Mucosa of descending colon (tissue), 3 donors: ENCODE measurements at regions of chr4 and their contacts with region 1.

Region 1: DNA sequence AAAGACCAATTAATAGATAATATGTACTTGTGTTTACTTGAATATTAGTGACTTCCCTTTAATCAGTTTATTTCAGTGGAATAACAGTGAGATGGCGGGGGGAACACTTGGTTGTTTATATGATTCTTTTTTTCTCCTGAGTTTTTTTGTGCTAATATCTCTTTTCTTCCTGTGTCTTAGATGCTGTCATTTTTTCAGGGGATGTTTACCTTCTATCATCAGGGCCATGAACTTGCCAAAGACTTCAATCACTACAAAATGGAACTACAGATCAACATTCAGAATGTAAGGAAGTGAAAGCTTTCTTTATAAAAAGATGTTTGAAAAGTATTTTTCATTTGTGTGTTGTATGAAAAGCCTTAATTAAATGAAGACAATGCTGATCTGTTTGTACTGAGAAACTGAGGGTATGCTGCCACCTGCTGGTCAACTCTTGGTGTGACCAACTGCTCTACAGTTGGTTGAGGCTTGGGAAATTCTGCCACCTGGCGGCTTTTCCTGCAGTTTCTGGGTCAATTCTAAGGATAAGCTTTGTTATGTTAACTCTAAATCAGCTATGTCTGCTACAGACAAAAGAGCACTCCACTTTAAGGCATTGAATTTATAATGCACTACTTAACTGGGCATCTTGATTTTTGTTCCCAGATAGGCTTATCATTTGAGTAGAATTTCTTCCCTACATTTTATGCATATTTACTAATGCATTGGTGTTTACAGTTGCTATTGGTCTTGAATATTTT is 134.8 kb downstream of the ARHGAP10 start:
- DNase-seq: peak; percentile 79 to 99 (median 90)
- ATAC-seq: peak; percentile 99
- H3K4me3 ChIP-seq: no peak overlapping the region
- H3K4me1 ChIP-seq: no peaks in the 10 kb centered on the region
- CTCF ChIP-seq: peak; percentile 98

Region 2: DNA sequence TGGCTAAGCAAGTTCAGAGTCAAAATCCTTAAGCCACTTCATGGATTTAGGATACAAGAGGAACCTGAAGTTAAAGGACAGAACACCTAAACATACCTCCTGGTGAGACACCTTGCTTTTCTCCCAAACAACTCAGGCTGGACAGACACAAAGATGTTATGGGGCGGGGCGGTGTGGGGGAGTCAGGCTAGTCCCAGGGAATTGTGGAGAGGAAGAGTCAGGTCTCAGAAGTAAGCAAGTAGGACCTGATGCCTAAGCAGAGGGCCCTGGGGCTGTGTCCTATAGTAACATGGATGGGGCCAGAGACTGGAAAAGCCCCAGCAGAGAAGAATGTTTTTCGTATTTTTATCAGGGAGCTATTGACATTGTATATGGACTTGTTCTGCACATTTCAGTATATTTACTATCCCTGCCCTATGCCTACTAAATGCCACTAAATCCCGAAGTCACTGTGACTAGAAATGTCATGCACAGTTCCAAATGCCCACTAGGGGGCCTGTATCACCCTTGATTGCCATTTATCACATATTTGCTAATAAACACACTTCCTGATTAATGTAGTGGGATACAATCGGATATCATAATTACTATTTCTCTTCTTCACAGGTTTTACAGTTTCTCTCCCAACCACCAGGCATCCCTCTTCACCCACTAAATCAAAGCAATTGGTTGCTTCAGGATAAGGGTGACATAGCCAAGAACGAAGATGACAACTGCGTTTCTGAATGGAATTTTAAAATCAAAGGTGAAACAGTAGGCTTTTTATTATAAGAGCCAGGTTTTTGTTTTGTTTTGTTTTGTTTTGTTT is 158.6 kb before region 1 on chr4:
- intact Hi-C with region 1: loop called (anchors 1 to 5 kb)
- DNase-seq: peak in 1 of 3 donors; percentile 78
- ATAC-seq: peak; percentile 62
- H3K4me3 ChIP-seq: no peak overlapping the region
- H3K4me1 ChIP-seq: no peaks in the 10 kb centered on the region
- CTCF ChIP-seq: peak; percentile 70

Region 3: GRCh38 chr4:147943159-147943638 is 76.5 kb after region 1 on chr4:
- intact Hi-C with region 1: no loop called
- DNase-seq: no peak
- ATAC-seq: no peak
- H3K4me3 ChIP-seq: no peak overlapping the region
- H3K4me1 ChIP-seq: no peaks in the 10 kb centered on the region
- CTCF ChIP-seq: no peak